Ascending aorta (tissue), 2 donors: ENCODE measurements at regions of chr16 and their contacts with region 1.

Region 1: DNA sequence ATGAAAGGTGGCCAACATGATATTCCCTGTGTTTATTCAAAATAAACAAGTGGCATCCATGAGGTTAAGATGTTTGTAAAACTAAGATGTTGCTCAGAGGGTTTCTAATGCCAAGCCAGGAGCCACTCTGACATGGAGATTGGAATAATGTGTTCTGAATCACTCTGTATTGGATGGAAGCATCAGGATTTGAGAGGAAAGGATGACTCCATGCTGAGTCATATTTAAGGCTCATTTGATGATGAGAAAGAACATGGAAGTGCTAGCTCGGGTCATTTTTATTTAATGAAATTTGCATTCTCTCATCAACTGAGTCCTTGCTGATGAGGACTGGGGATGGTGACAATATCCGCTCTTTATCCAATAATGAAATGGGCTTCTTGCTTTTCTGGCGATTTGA is 6.2 kb downstream of the VAT1L start:
- DNase-seq: no peak
- H3K4me3 ChIP-seq: no peak overlapping the region
- H3K27ac ChIP-seq: no peak overlapping the region
- H3K4me1 ChIP-seq: peaks cover 0 to 3% of the 10 kb centered on the region in 2 donors
- H3K27me3 ChIP-seq: no peaks in the 10 kb centered on the region
- CTCF ChIP-seq: no peak

Region 2: GRCh38 chr16:77009453-77009852 is 785.1 kb before region 1 on chr16:
- intact Hi-C with region 1: no loop called
- DNase-seq: no peak
- H3K4me3 ChIP-seq: no peak overlapping the region
- H3K27ac ChIP-seq: no peak overlapping the region
- H3K4me1 ChIP-seq: no peaks in the 10 kb centered on the region
- H3K27me3 ChIP-seq: no peaks in the 10 kb centered on the region
- CTCF ChIP-seq: no peak

Region 3: GRCh38 chr16:77488652-77489051 is 305.9 kb before region 1 on chr16:
- intact Hi-C with region 1: no loop called
- DNase-seq: no peak
- H3K4me3 ChIP-seq: no peak overlapping the region
- H3K27ac ChIP-seq: no peak overlapping the region
- H3K4me1 ChIP-seq: no peaks in the 10 kb centered on the region
- H3K27me3 ChIP-seq: no peaks in the 10 kb centered on the region
- CTCF ChIP-seq: no peak

Region 4: DNA sequence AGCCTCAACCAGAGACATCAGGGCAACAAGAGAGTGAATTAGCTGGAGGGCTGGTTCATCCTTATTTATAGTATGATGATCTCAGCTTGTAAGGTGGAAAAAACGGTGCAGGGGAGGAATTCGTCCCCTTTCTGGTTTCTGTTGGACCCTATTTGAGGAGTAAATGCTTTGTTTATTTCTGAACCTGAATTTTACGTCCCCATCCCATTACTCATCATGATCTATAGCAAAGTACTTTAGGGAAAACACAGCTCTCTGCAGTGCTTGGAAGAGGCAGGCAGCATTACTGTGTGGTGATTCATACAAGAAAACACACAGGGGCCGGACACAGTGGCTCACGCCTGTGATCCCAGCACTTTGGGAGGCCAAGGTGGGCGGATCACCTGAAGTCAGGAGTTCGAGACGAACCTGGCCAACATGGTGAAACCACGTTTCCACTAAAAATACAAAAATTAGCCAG is 14.2 kb before region 1 on chr16:
- intact Hi-C with region 1: loop called (anchors 2 kb)
- DNase-seq: peak; percentile 14 to 73
- H3K4me3 ChIP-seq: no peak overlapping the region
- H3K27ac ChIP-seq: peak overlapping the region; percentile 31 to 58
- H3K4me1 ChIP-seq: peaks cover 0 to 6% of the 10 kb centered on the region in 2 donors
- H3K27me3 ChIP-seq: no peaks in the 10 kb centered on the region
- CTCF ChIP-seq: no peak